ENCODE measurements at regions of chr21 and their contacts with region 1.

Region 1: GRCh38 chr21:34722684-34723300 is 54.0 kb downstream of the CLIC6 start:
- H3K4me3 ChIP-seq: no peak overlapping the region
- H3K27ac ChIP-seq: no peak overlapping the region
- H3K4me1 ChIP-seq: no peaks in the 10 kb centered on the region
- CTCF ChIP-seq: peak; percentile 50; the same call in 1 of the 2 replicates

Region 2: GRCh38 chr21:34091607-34092006 is 631.2 kb before region 1 on chr21:
- CTCF ChIA-PET with region 1: no interaction called
- POLR2A ChIA-PET with region 1: no interaction called
- H3K4me3 ChIP-seq: no peak overlapping the region
- H3K27ac ChIP-seq: no peak overlapping the region
- H3K4me1 ChIP-seq: peaks cover 23% of the 10 kb centered on the region
- CTCF ChIP-seq: no peak

Region 3: DNA sequence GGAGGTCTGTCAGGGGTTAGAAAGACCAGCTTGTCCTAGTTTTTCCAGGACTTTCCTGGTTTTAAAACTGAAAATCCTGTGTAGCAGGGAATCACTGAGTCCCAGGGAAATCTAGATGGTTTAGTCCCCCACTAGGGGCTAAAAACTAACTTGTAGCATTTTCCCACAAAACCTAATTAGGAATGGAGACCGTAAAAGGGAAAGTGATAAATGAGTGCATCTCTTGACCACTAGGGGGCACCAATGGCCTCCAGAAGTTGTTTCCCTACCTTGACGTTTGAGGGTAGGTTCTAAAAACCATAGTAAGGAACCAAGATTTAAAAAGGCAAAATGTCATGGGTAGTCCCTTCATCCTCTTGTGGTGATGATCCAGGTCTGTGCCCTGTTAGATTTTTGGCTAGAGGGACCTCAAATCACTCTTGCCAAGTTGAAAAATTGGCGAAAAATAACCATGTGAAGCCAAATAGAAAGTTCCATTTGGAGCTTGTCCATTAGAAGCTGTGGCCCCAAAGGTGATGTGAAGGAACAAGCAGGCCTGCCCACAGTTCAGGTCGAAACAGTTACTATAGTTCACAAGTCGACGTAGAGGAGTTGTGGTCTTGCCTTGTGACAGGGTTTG is 29.5 kb before region 1 on chr21:
- CTCF ChIA-PET with region 1: interaction called, 25 read pairs
- POLR2A ChIA-PET with region 1: no interaction called
- H3K4me3 ChIP-seq: no peak overlapping the region
- H3K27ac ChIP-seq: no peak overlapping the region
- H3K4me1 ChIP-seq: no peaks in the 10 kb centered on the region
- CTCF ChIP-seq: peak; percentile 57; the same call in 1 of the 2 replicates

Region 4: GRCh38 chr21:34707876-34708325 is 14.9 kb before region 1 on chr21:
- CTCF ChIA-PET with region 1: interaction called, 29 read pairs
- POLR2A ChIA-PET with region 1: no interaction called
- H3K4me3 ChIP-seq: no peak overlapping the region
- H3K27ac ChIP-seq: no peak overlapping the region
- H3K4me1 ChIP-seq: no peaks in the 10 kb centered on the region
- CTCF ChIP-seq: no peak

Region 5: GRCh38 chr21:34737107-34737506 is 14.3 kb after region 1 on chr21:
- CTCF ChIA-PET with region 1: interaction called, 27 read pairs
- POLR2A ChIA-PET with region 1: no interaction called
- H3K4me3 ChIP-seq: no peak overlapping the region
- H3K27ac ChIP-seq: no peak overlapping the region
- H3K4me1 ChIP-seq: no peaks in the 10 kb centered on the region
- CTCF ChIP-seq: no peak